Breast epithelium (tissue), 4 donors: ENCODE measurements at regions of chr1 and their contacts with region 1.

Region 1: DNA sequence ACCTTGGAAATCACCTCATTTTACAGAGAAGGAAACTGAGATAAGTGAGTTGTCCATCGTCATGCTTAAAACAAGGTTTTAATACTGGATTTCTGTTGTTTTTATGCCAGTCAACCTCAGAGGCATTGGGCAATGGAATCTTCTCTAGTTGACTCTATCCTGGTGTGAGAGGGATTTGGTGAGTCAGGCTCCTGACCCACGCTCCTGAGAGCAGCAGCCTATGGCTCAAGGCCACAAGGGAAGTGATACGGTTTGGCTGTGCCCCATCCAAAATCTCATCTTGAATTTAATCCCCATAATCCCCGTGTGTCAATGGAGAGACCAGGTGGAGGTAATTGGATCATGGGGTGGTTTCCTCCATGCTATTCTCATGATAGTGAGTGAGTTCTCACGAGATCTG is 90.1 kb downstream of the TLR5 start:
- DNase-seq: no peak
- H3K4me3 ChIP-seq: no peak overlapping the region
- H3K27ac ChIP-seq: no peak overlapping the region
- H3K4me1 ChIP-seq: no peaks in the 10 kb centered on the region
- H3K27me3 ChIP-seq: no peaks in the 10 kb centered on the region
- CTCF ChIP-seq: no peak
- POLR2A ChIP-seq: no peak

Region 2: GRCh38 chr1:223033658-223034057 is 19.3 kb before region 1 on chr1:
- intact Hi-C with region 1: loop called (anchors 2 kb)
- DNase-seq: no peak
- H3K4me3 ChIP-seq: no peak overlapping the region
- H3K27ac ChIP-seq: no peak overlapping the region
- H3K4me1 ChIP-seq: no peaks in the 10 kb centered on the region
- H3K27me3 ChIP-seq: no peaks in the 10 kb centered on the region
- CTCF ChIP-seq: no peak
- POLR2A ChIP-seq: no peak